ENCODE measurements at regions of chr4 and their contacts with region 1.

Region 1: GRCh38 chr4:148441986-148442831 is at the start of gene NR3C2:
- DNase-seq: peak; percentile 95 to 98
- H3K4me3 ChIP-seq: peak within 1 kb of the TSS; percentile 76
- H3K4me3 Mint-ChIP-seq: peak within 1 kb of the TSS; percentile 84
- H3K27ac Mint-ChIP-seq: no peak within 1 kb of the TSS
- H3K4me1 ChIP-seq: peaks cover 9% of the 10 kb centered on the region
- H3K4me1 Mint-ChIP-seq: peaks cover 8% of the 10 kb centered on the region
- H3K27me3 ChIP-seq: no peaks in the 10 kb centered on the region; the same call in 1 of the 2 replicates
- H3K27me3 Mint-ChIP-seq: peaks cover 26% of the 10 kb centered on the region
- CTCF ChIP-seq: no peak
- total RNA-seq, gene NR3C2: 0.12 and 0.16 TPM in 2 replicates

Region 2: DNA sequence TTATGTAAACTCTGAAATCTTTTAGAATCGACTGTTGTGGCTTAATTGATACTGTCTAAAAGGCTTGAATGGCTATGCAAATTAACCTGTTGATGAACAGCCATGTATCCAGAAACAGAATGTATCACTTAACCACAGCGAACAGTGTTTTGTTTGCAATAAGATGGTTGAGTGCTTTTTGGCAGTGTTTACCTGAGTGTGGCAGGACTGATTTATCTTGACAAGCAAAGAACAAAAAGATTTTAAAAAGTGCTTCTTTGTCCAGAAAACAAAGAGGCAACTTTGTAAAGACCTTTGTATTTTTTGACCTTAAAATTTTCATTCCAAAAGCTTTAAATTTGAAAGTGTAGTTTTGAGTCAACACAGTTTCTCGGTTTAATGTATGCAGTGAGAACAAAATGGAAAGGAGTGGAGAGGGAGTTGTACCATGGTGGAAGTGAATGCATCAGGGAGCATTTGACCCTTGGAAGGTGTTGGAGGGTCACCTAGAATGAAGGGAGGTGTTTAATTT is 692.3 kb before region 1 on chr4:
- CTCF ChIA-PET with region 1: no interaction called
- POLR2A ChIA-PET with region 1: no interaction called
- intact Hi-C with region 1: no loop called
- DNase-seq: no peak
- H3K4me3 ChIP-seq: no peak overlapping the region
- H3K4me3 Mint-ChIP-seq: no peak overlapping the region
- H3K27ac Mint-ChIP-seq: no peak overlapping the region
- H3K4me1 ChIP-seq: peaks cover 34% of the 10 kb centered on the region
- H3K4me1 Mint-ChIP-seq: peaks cover 22% of the 10 kb centered on the region
- H3K27me3 ChIP-seq: no peaks in the 10 kb centered on the region
- H3K27me3 Mint-ChIP-seq: no peaks in the 10 kb centered on the region
- CTCF ChIP-seq: no peak

Region 3: DNA sequence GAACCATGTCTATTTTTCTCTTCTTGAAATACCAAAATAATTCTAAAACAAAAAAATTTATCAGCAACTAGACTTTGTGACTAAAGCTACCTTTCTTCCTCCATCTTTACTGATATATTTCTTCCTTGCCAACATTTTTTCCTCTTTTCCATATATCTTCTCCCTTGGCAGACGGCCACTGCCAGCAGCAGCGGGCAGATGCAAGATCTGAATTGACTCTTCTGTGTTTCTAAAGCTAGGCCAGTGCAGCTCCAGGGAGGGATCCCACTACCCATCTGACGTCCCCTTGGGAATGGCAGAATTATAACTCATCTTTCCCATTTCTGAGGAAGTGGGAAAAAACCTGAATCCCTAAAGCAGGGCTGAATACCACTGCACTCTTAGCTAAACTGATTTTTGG is 206.4 kb before region 1 on chr4:
- CTCF ChIA-PET with region 1: no interaction called
- POLR2A ChIA-PET with region 1: no interaction called
- intact Hi-C with region 1: no loop called
- DNase-seq: no peak
- H3K4me3 ChIP-seq: no peak overlapping the region
- H3K4me3 Mint-ChIP-seq: no peak overlapping the region
- H3K27ac Mint-ChIP-seq: no peak overlapping the region
- H3K4me1 ChIP-seq: no peaks in the 10 kb centered on the region
- H3K4me1 Mint-ChIP-seq: peaks cover 6% of the 10 kb centered on the region
- H3K27me3 ChIP-seq: no peaks in the 10 kb centered on the region
- H3K27me3 Mint-ChIP-seq: peaks cover 2% of the 10 kb centered on the region
- CTCF ChIP-seq: no peak

Region 4: GRCh38 chr4:148539387-148539786 is 97.2 kb after region 1 on chr4:
- CTCF ChIA-PET with region 1: no interaction called
- POLR2A ChIA-PET with region 1: no interaction called
- intact Hi-C with region 1: loop called (anchors 1 kb)
- DNase-seq: peak; percentile 64 to 73
- H3K4me3 ChIP-seq: no peak overlapping the region
- H3K4me3 Mint-ChIP-seq: no peak overlapping the region
- H3K27ac Mint-ChIP-seq: no peak overlapping the region
- H3K4me1 ChIP-seq: peaks cover 10% of the 10 kb centered on the region
- H3K4me1 Mint-ChIP-seq: no peaks in the 10 kb centered on the region
- H3K27me3 ChIP-seq: no peaks in the 10 kb centered on the region
- H3K27me3 Mint-ChIP-seq: no peaks in the 10 kb centered on the region
- CTCF ChIP-seq: no peak

Region 5: GRCh38 chr4:148795156-148795864 is 353.1 kb after region 1 on chr4:
- CTCF ChIA-PET with region 1: no interaction called
- POLR2A ChIA-PET with region 1: no interaction called
- intact Hi-C with region 1: loop called (anchors 10 kb)
- DNase-seq: peak; percentile 57 to 70
- H3K4me3 ChIP-seq: no peak overlapping the region
- H3K4me3 Mint-ChIP-seq: peak overlapping the region; percentile 2
- H3K27ac Mint-ChIP-seq: peak overlapping the region; percentile 69
- H3K4me1 ChIP-seq: peaks cover 22% of the 10 kb centered on the region
- H3K4me1 Mint-ChIP-seq: peaks cover 18% of the 10 kb centered on the region
- H3K27me3 ChIP-seq: no peaks in the 10 kb centered on the region
- H3K27me3 Mint-ChIP-seq: no peaks in the 10 kb centered on the region
- CTCF ChIP-seq: no peak

Region 6: GRCh38 chr4:148852092-148852699 is 410.0 kb after region 1 on chr4:
- CTCF ChIA-PET with region 1: no interaction called
- POLR2A ChIA-PET with region 1: no interaction called
- intact Hi-C with region 1: loop called (anchors 5 kb)
- DNase-seq: no peak
- H3K4me3 ChIP-seq: no peak overlapping the region
- H3K4me3 Mint-ChIP-seq: no peak overlapping the region
- H3K27ac Mint-ChIP-seq: no peak overlapping the region
- H3K4me1 ChIP-seq: peaks cover 16% of the 10 kb centered on the region
- H3K4me1 Mint-ChIP-seq: peaks cover 10% of the 10 kb centered on the region
- H3K27me3 ChIP-seq: no peaks in the 10 kb centered on the region
- H3K27me3 Mint-ChIP-seq: no peaks in the 10 kb centered on the region
- CTCF ChIP-seq: no peak

Region 7: DNA sequence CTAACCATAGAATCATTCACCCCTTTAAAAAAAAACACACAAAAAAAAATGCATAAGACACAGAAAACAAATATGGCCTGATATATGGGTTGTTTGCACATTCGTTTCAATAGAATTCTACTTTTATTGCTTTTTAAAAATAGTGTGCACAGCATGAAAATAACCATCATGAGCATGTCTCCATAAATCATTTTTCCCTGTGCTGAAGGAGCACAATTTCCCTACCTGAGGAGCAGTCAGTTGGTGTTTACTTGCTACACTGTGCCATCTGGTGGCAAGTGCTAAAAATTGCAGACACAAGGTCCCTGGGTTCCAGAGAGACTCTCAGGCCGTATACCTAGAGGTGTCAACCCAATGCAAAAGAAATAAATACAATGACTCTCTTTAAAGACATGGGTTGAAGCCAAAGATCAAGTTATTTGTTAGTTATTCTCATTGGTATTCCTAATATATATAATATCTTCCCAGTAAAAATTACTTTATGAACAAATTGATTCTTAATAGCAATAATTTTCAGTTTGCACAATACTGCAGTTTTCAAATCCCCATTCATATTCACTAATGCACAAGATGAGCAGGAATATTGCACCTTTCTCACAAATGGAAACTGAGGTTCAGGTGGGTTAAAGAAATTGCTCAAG is 822.0 kb after region 1 on chr4:
- CTCF ChIA-PET with region 1: no interaction called
- POLR2A ChIA-PET with region 1: no interaction called
- intact Hi-C with region 1: loop called (anchors 10 kb)
- DNase-seq: peak; percentile 49 to 50
- H3K4me3 ChIP-seq: no peak overlapping the region
- H3K4me3 Mint-ChIP-seq: no peak overlapping the region
- H3K27ac Mint-ChIP-seq: no peak overlapping the region
- H3K4me1 ChIP-seq: no peaks in the 10 kb centered on the region
- H3K4me1 Mint-ChIP-seq: no peaks in the 10 kb centered on the region
- H3K27me3 ChIP-seq: no peaks in the 10 kb centered on the region
- H3K27me3 Mint-ChIP-seq: no peaks in the 10 kb centered on the region
- CTCF ChIP-seq: peak; percentile 67 to 68

Measured in Caco-2 (cell line).